ENCODE measurements at regions of chr6 and their contacts with region 1.

Region 1: GRCh38 chr6:111259089-111259831 is 172.0 kb downstream of the SLC16A10 start:
- DNase-seq: peak; percentile 99
- ATAC-seq: peak; percentile 97 to 99 (median 98)
- H3K4me3 ChIP-seq: peak overlapping the region; percentile 39 to 92 (median 76)
- H3K27ac ChIP-seq: peak overlapping the region; percentile 84 to 95 (median 90)
- H3K4me1 ChIP-seq: peaks cover 0 to 9% (median 5%) of the 10 kb centered on the region in 3 donors
- H3K27me3 ChIP-seq: no peaks in the 10 kb centered on the region
- CTCF ChIP-seq: peak; percentile 92 to 95 (median 94)

Region 2: DNA sequence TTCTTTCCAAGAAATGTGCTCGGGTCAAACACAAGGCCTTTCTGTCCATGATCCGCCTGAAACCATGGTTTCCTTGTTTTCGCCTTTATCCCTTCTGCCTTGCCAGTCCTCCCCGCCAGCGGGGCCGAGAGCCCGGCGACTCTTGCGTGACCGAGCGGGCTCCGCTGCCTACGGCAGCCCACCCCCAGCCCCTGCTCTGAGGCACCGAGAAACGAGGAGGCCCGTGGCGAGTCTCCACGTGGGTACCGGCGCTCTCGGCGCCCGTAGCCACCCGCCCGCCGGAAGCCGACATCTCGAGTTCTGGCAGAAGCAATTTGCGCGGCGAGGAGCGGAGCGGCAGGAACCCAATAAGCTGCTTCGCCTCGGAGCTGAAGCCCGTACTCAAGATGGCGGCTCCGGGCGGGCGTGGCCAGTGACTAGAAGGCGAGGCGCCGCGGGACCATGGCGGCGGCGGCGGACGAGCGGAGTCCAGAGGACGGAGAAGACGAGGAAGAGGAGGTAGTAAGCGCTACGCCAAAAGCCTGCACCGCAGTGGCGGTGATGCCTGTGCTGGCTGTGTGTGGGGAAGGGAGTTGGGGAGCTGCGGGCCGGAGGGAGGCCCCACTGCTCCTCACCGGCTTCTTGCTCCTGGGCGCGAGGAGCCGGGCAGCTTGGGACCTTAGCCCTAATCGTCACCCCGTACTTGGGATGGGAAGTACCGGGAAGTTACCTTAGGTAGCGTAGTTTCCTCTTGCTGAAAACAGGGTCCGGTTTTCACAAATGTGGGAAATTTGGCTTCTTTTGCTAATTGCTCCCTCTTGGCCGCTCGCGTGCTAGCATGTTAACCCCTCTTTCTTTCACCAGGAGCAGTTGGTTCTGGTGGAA is 300.7 kb before region 1 on chr6 and contains the start of gene GTF3C6:
- intact Hi-C with region 1: no loop called
- DNase-seq: peak; percentile 87 to 97 (median 90)
- ATAC-seq: peak; percentile 97 to 100 (median 99)
- H3K4me3 ChIP-seq: peak within 1 kb of the TSS; percentile 74 to 90 (median 86)
- H3K27ac ChIP-seq: peak within 1 kb of the TSS; percentile 72 to 92 (median 88)
- H3K4me1 ChIP-seq: peaks cover 0 to 5% (median 5%) of the 10 kb centered on the region in 3 donors
- H3K27me3 ChIP-seq: no peaks in the 10 kb centered on the region
- CTCF ChIP-seq: no peak
- total RNA-seq, gene GTF3C6: 14.8 to 35.2 (median 21.0) TPM

Region 3: GRCh38 chr6:111625461-111626391 is 366.5 kb after region 1 on chr6:
- intact Hi-C with region 1: loop called in 1 of 3 experiments (anchors 10 kb)
- DNase-seq: peak in 4 of 6 donors; percentile 46 to 62 (median 52)
- ATAC-seq: peak; percentile 78 to 96 (median 90)
- H3K4me3 ChIP-seq: peak overlapping the region in 2 of 4 donors; percentile 15 to 25
- H3K27ac ChIP-seq: peak overlapping the region in 3 of 4 donors; percentile 2 to 33 (median 33)
- H3K4me1 ChIP-seq: peaks cover 0 to 7% (median 4%) of the 10 kb centered on the region in 3 donors
- H3K27me3 ChIP-seq: no peaks in the 10 kb centered on the region
- CTCF ChIP-seq: no peak

Measured in pancreas (tissue), 10 donors.